Activated naive CD4-positive, alpha-beta T cell treated with anti-CD3 and anti-CD28 coated beads for 36 hours (primary cell): ENCODE measurements at regions of chr14 and their contacts with region 1.

Region 1: GRCh38 chr14:100108042-100108825 is 43.0 kb downstream of the EVL start:
- DNase-seq: peak; percentile 94
- H3K4me3 Mint-ChIP-seq: no peak overlapping the region
- H3K27ac Mint-ChIP-seq: peak overlapping the region; percentile 94
- H3K4me1 Mint-ChIP-seq: peaks cover 75% of the 10 kb centered on the region
- H3K27me3 Mint-ChIP-seq: no peaks in the 10 kb centered on the region

Region 2: GRCh38 chr14:99982537-99983250 is 125.5 kb before region 1 on chr14:
- CTCF ChIA-PET with region 1: interaction called, 38 read pairs
- intact Hi-C with region 1: loop called (anchors 1 kb)
- DNase-seq: peak; percentile 76
- H3K4me3 Mint-ChIP-seq: no peak overlapping the region
- H3K27ac Mint-ChIP-seq: no peak overlapping the region
- H3K4me1 Mint-ChIP-seq: peaks cover 18% of the 10 kb centered on the region
- H3K27me3 Mint-ChIP-seq: no peaks in the 10 kb centered on the region

Region 3: GRCh38 chr14:100078991-100079725 is 29.1 kb before region 1 on chr14:
- CTCF ChIA-PET with region 1: interaction called, 932 read pairs
- intact Hi-C with region 1: no loop called
- DNase-seq: peak; percentile 78
- H3K4me3 Mint-ChIP-seq: peak overlapping the region; percentile 74
- H3K27ac Mint-ChIP-seq: peak overlapping the region; percentile 96
- H3K4me1 Mint-ChIP-seq: peaks cover 94% of the 10 kb centered on the region
- H3K27me3 Mint-ChIP-seq: no peaks in the 10 kb centered on the region

Region 4: GRCh38 chr14:100129161-100129681 is 21.0 kb after region 1 on chr14:
- CTCF ChIA-PET with region 1: interaction called, 11 read pairs
- intact Hi-C with region 1: no loop called
- DNase-seq: no peak
- H3K4me3 Mint-ChIP-seq: no peak overlapping the region
- H3K27ac Mint-ChIP-seq: peak overlapping the region; percentile 30
- H3K4me1 Mint-ChIP-seq: no peaks in the 10 kb centered on the region
- H3K27me3 Mint-ChIP-seq: no peaks in the 10 kb centered on the region

Region 5: DNA sequence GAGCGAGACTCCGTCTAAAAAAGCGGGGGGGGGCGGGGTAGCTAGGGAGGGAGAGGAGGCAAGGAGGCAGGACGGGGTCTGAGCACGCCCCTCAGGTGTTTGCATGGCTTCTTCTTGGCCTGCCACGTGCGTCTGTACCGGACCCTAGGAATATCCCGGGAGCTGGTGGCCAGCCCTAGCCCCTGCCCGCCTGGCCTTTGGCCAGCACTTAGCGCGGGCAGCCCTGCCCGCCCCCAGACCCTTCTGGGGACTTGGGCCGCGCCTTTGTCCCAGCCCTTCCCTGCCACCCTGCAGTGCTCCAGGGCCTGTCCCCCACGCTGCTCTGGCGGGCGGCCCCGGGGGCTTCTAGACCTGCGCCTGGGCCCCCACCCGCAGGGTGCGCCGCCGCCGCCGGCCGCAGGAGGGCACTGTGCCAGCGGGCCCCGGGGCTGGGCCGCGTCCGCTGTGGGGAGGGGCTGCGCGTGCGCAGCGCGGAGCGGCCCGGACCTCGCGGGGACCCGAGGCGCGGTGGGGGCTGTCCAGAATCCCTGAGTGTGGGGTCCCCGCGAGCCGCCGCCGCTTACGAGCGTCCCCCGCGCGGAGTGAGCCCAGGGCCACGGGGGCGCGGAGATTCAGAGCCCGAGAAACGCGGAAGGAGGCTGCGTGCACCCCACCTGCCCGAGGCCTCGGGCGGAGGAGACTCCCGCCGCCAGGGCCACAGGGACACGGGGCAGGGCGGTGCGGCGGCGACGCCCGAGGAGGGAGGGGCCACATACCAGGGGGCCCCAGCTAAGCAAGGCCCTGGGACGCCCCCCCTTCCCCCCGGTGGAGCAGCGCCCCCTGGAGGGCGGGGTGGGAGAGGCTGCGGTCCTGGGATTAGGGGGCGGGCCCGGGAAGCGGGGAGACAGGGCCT is 177.0 kb after region 1 on chr14:
- CTCF ChIA-PET with region 1: no interaction called
- intact Hi-C with region 1: no loop called
- DNase-seq: peak; percentile 75
- H3K4me3 Mint-ChIP-seq: peak overlapping the region; percentile 69
- H3K27ac Mint-ChIP-seq: no peak overlapping the region
- H3K4me1 Mint-ChIP-seq: peaks cover 8% of the 10 kb centered on the region
- H3K27me3 Mint-ChIP-seq: no peaks in the 10 kb centered on the region

Region 6: GRCh38 chr14:100375963-100376735 is 267.9 kb after region 1 on chr14:
- CTCF ChIA-PET with region 1: no interaction called
- intact Hi-C with region 1: loop called (anchors 5 kb)
- DNase-seq: peak; percentile 94
- H3K4me3 Mint-ChIP-seq: peak within 1 kb of the TSS; percentile 99
- H3K27ac Mint-ChIP-seq: peak within 1 kb of the TSS; percentile 98
- H3K4me1 Mint-ChIP-seq: peaks cover 45% of the 10 kb centered on the region
- H3K27me3 Mint-ChIP-seq: no peaks in the 10 kb centered on the region